Caco-2 (cell line): ENCODE measurements at regions of chr3 and their contacts with region 1.

Region 1: DNA sequence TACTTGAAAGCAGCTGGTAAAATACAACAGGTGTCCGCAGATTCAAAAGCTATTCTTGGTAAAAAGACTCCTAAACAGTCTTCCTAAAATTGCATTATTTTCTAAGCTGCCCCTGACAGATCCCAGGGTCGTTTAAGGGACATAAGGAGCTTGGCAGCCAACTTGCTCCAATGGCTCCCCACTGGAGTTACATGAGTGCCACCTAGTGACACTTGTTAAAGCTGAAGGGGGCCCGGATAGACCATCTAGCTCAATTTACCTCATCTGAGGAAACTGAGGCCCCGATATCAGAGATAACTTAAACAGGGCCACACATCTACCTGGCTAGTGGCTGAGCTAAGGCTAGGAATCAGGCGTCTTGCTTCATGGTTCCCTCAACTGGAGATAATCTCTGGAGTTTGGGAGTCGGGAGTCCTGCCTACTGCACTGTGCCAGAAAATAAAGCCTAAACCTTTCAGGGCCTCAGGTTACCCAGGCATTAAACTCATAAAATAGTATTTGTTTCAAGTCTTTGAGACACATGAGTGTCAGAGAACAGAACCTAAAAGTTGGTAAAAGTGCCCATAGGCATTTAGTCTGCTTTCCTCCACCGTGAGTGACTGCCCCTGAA is 6.5 kb upstream of the TBC1D23 start:
- DNase-seq: peak; percentile 62 to 68
- H3K4me3 ChIP-seq: no peak overlapping the region
- H3K4me3 Mint-ChIP-seq: no peak overlapping the region
- H3K27ac Mint-ChIP-seq: no peak overlapping the region
- H3K4me1 ChIP-seq: peaks cover 11% of the 10 kb centered on the region
- H3K4me1 Mint-ChIP-seq: peaks cover 13% of the 10 kb centered on the region
- H3K27me3 ChIP-seq: no peaks in the 10 kb centered on the region
- H3K27me3 Mint-ChIP-seq: no peaks in the 10 kb centered on the region
- CTCF ChIP-seq: peak; percentile 64 to 71

Region 2: GRCh38 chr3:99586701-99587100 is 667.6 kb before region 1 on chr3:
- CTCF ChIA-PET with region 1: no interaction called
- POLR2A ChIA-PET with region 1: no interaction called
- intact Hi-C with region 1: no loop called
- DNase-seq: no peak
- H3K4me3 ChIP-seq: no peak overlapping the region
- H3K4me3 Mint-ChIP-seq: no peak overlapping the region
- H3K27ac Mint-ChIP-seq: no peak overlapping the region
- H3K4me1 ChIP-seq: no peaks in the 10 kb centered on the region
- H3K4me1 Mint-ChIP-seq: no peaks in the 10 kb centered on the region
- H3K27me3 ChIP-seq: no peaks in the 10 kb centered on the region
- H3K27me3 Mint-ChIP-seq: peaks cover 4% of the 10 kb centered on the region
- CTCF ChIP-seq: no peak

Region 3: DNA sequence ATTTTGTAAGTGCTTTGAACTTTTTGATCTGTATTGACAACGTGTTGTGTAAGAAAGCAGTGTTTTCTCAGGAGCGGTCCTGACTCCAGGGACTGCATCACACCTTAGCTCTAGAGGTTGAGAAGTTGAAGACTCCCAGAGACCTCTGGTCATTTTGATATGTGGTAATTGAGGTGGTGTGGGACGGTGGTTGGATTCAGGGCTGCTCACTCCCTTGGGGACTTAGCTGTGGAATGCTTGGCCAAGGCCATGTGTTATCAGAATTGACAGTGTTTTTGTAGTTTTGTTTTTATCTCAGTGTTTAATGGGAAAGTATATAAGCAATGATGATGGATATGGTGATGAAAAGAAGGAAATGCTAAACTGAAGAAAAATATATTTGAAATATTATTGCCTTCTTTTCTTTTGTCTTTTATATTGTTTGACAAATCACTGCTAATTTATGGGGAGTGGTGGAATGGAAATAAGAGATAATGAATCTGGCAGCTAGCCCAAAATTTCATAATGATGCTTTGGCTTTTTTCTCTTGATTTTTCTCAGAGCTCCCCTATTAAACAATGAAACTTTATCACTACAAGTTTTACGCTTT is 420.6 kb before region 1 on chr3:
- CTCF ChIA-PET with region 1: interaction called, 45 read pairs
- POLR2A ChIA-PET with region 1: interaction called, 3 read pairs
- intact Hi-C with region 1: loop called (anchors 1 kb)
- DNase-seq: no peak
- H3K4me3 ChIP-seq: no peak overlapping the region
- H3K4me3 Mint-ChIP-seq: no peak overlapping the region
- H3K27ac Mint-ChIP-seq: no peak overlapping the region
- H3K4me1 ChIP-seq: no peaks in the 10 kb centered on the region
- H3K4me1 Mint-ChIP-seq: peaks cover 16% of the 10 kb centered on the region
- H3K27me3 ChIP-seq: no peaks in the 10 kb centered on the region
- H3K27me3 Mint-ChIP-seq: no peaks in the 10 kb centered on the region
- CTCF ChIP-seq: no peak

Region 4: DNA sequence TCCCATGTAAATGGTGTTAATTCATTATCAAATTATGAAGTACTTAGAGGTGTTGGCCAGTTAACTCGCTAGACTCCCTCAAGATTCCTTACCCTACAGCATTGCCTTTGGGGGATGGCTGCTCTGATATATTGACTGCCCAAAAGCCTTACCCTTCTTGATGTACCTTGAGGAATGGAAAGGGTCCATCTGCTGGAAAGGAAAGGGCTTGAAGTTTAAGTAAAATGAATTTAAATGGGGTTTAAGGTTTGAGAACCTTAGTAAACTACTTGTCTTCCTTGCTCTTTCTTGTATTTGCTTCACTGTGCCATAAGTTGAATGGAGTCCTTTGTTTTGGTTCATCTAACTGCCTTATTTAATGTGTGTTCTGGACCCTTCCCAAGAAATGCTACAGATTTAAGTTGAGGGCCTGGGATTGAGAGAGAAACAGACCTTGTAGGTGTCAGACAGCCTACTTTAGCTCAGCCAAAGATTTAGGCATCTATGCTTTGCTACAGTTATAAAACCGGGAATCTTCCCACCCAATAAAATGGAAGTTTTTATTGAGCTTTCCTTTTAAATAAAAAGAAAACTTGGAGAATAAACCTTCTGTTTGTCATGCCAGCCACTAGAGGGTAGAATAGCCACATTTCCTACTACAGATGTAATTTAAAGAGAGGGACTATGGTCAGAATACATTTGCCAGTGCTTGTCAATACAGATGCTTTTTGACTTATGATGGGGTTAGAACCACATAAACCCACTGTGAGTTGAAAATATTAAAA is 411.3 kb before region 1 on chr3:
- CTCF ChIA-PET with region 1: interaction called, 36 read pairs
- POLR2A ChIA-PET with region 1: no interaction called
- intact Hi-C with region 1: loop called (anchors 1 kb)
- DNase-seq: peak in 1 of 2 experiments; percentile 33
- H3K4me3 ChIP-seq: no peak overlapping the region
- H3K4me3 Mint-ChIP-seq: no peak overlapping the region
- H3K27ac Mint-ChIP-seq: no peak overlapping the region
- H3K4me1 ChIP-seq: peaks cover 12% of the 10 kb centered on the region; the same call in 1 of the 2 replicates
- H3K4me1 Mint-ChIP-seq: peaks cover 6% of the 10 kb centered on the region
- H3K27me3 ChIP-seq: no peaks in the 10 kb centered on the region
- H3K27me3 Mint-ChIP-seq: no peaks in the 10 kb centered on the region
- CTCF ChIP-seq: peak; percentile 63 to 67

Region 5: GRCh38 chr3:99875929-99876841 is 378.1 kb before region 1 on chr3:
- CTCF ChIA-PET with region 1: interaction called, 13 read pairs
- POLR2A ChIA-PET with region 1: interaction called, 4 read pairs
- intact Hi-C with region 1: no loop called
- DNase-seq: peak; percentile 82 to 90
- H3K4me3 ChIP-seq: peak overlapping the region; percentile 67
- H3K4me3 Mint-ChIP-seq: peak overlapping the region; percentile 82
- H3K27ac Mint-ChIP-seq: peak overlapping the region; percentile 89
- H3K4me1 ChIP-seq: peaks cover 38% of the 10 kb centered on the region
- H3K4me1 Mint-ChIP-seq: peaks cover 12% of the 10 kb centered on the region
- H3K27me3 ChIP-seq: no peaks in the 10 kb centered on the region
- H3K27me3 Mint-ChIP-seq: no peaks in the 10 kb centered on the region
- CTCF ChIP-seq: peak; percentile 0 to 16

Region 6: GRCh38 chr3:99920481-99921376 is 333.5 kb before region 1 on chr3:
- CTCF ChIA-PET with region 1: no interaction called
- POLR2A ChIA-PET with region 1: no interaction called
- intact Hi-C with region 1: loop called (anchors 5 kb)
- DNase-seq: peak; percentile 50 to 81
- H3K4me3 ChIP-seq: no peak overlapping the region
- H3K4me3 Mint-ChIP-seq: peak overlapping the region; percentile 32
- H3K27ac Mint-ChIP-seq: peak overlapping the region; percentile 66
- H3K4me1 ChIP-seq: peaks cover 65% of the 10 kb centered on the region
- H3K4me1 Mint-ChIP-seq: peaks cover 54% of the 10 kb centered on the region
- H3K27me3 ChIP-seq: no peaks in the 10 kb centered on the region
- H3K27me3 Mint-ChIP-seq: no peaks in the 10 kb centered on the region
- CTCF ChIP-seq: no peak

Region 7: GRCh38 chr3:100009276-100010086 is 244.8 kb before region 1 on chr3:
- CTCF ChIA-PET with region 1: no interaction called
- POLR2A ChIA-PET with region 1: no interaction called
- intact Hi-C with region 1: no loop called
- DNase-seq: no peak
- H3K4me3 ChIP-seq: no peak overlapping the region
- H3K4me3 Mint-ChIP-seq: no peak overlapping the region
- H3K27ac Mint-ChIP-seq: no peak overlapping the region
- H3K4me1 ChIP-seq: peaks cover 18% of the 10 kb centered on the region
- H3K4me1 Mint-ChIP-seq: peaks cover 27% of the 10 kb centered on the region
- H3K27me3 ChIP-seq: no peaks in the 10 kb centered on the region
- H3K27me3 Mint-ChIP-seq: no peaks in the 10 kb centered on the region
- CTCF ChIP-seq: no peak

Region 8: GRCh38 chr3:100068826-100069225 is 185.4 kb before region 1 on chr3:
- CTCF ChIA-PET with region 1: interaction called, 23 read pairs
- POLR2A ChIA-PET with region 1: no interaction called
- intact Hi-C with region 1: loop called (anchors 1 kb)
- DNase-seq: peak; percentile 70 to 80
- H3K4me3 ChIP-seq: no peak overlapping the region
- H3K4me3 Mint-ChIP-seq: no peak overlapping the region
- H3K27ac Mint-ChIP-seq: no peak overlapping the region
- H3K4me1 ChIP-seq: peaks cover 21% of the 10 kb centered on the region
- H3K4me1 Mint-ChIP-seq: peaks cover 6% of the 10 kb centered on the region
- H3K27me3 ChIP-seq: no peaks in the 10 kb centered on the region
- H3K27me3 Mint-ChIP-seq: no peaks in the 10 kb centered on the region
- CTCF ChIP-seq: peak; percentile 50 to 63